ENCODE measurements at regions of chr11 and their contacts with region 1.

Region 1: DNA sequence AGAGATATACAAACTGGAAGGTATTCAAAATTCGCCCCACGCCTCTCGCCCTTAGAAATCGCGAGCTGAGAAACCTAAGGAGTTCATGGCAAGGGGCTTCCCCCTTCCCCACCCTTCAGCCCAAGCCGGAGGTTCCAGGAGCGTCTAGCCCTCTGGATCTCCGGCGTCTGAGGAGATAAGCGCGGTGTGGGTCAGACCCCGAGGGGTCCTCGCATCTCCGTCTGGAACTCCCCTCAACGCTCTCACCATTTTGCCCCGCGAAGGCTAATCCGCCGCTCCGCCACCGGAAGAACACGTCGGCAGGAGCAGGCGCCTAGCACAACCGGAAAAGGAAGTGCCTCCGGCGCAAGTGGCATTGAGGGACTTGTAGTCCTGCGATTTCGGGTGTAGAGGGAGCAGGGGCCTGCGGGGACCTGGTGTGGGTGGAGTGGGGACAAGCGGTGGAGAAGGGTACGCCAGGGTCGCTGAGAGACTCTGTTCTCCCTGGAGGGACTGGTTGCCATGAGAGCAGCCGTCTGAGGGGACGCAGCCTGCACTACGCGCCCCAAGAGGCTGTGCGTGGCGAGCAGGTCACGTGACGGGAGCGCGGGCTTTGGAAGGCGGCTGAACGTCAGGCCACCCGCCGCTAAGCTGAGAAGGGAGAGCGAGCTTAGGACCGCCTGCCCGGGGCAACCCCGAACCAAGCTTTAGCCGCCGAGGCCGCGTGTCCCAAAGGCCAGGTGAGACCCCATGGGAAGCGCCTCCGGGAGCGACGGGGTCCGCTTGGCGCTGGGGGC is at the starts of genes FEN1 and TMEM258:
- DNase-seq: peak; percentile 92 to 95
- ATAC-seq: peak; percentile 84 to 90
- H3K4me3 ChIP-seq: peak within 1 kb of the TSS; percentile 56
- H3K27ac ChIP-seq: peak within 1 kb of the TSS; percentile 92 to 100
- H3K4me1 ChIP-seq: peaks cover 24% of the 10 kb centered on the region; the same call in 1 of the 3 replicates
- CTCF ChIP-seq: no peak
- EP300 ChIP-seq: no peak
- POLR2A ChIP-seq: peak; percentile 79
- RAD21 ChIP-seq: no peak
- polyA plus RNA-seq, gene FEN1: 36.3 and 38.4 TPM in 2 replicates
- polyA plus RNA-seq, gene TMEM258: 280 and 375 TPM in 2 replicates

Region 2: DNA sequence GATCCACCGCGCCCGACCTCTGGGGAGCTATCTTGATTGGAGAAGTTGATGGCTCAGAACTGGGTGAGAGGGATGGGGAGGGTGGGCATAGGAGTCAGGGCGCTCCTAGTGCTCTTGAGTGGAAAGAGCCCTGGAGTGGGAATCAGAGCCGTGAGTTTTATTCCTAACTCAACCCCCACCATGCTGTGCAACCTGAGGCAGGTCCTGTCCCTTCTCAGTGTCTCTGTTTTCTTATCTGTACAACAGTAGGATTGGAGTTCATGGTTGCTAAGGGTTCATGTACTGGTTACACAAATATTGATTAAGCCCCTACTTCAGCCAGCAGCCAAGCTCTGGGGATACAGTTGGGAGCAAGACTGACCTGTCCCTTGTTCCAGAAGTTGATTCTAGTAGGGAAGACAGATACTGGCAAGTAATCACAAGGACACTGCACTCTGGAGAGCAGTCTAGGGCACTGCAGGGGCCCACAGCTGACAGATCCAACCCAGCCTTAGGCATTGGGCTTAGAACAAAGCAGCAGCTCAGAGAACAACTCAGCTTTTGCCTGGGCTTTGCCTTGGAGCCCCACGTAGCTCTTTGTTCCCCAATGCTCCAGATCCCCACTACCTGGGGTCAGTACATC is 124.7 kb before region 1 on chr11:
- CTCF ChIA-PET with region 1: no interaction called
- POLR2A ChIA-PET with region 1: no interaction called
- DNase-seq: no peak
- ATAC-seq: peak in 1 of 2 experiments; percentile 62; a peak in 3 of 6 replicates
- H3K4me3 ChIP-seq: no peak overlapping the region
- H3K27ac ChIP-seq: no peak overlapping the region
- H3K4me1 ChIP-seq: peaks cover 8% of the 10 kb centered on the region; the same call in 1 of the 3 replicates
- CTCF ChIP-seq: no peak
- EP300 ChIP-seq: no peak
- POLR2A ChIP-seq: no peak
- RAD21 ChIP-seq: no peak

Region 3: GRCh38 chr11:61747192-61747966 is 45.1 kb before region 1 on chr11:
- CTCF ChIA-PET with region 1: interaction called, 147 read pairs
- POLR2A ChIA-PET with region 1: no interaction called
- DNase-seq: peak; percentile 78 to 79
- ATAC-seq: peak; percentile 76 to 93
- H3K4me3 ChIP-seq: no peak overlapping the region
- H3K27ac ChIP-seq: peak overlapping the region; percentile 40 to 70; a peak in 5 of 6 replicates
- H3K4me1 ChIP-seq: peaks cover 14% of the 10 kb centered on the region
- CTCF ChIP-seq: peak; percentile 89
- EP300 ChIP-seq: no peak
- POLR2A ChIP-seq: no peak
- RAD21 ChIP-seq: peak; percentile 88 to 91

Region 4: GRCh38 chr11:61776551-61777075 is 15.9 kb before region 1 on chr11:
- CTCF ChIA-PET with region 1: interaction called, 18 read pairs
- POLR2A ChIA-PET with region 1: interaction called, 7 read pairs
- DNase-seq: peak; percentile 81 to 94
- ATAC-seq: peak; percentile 61 to 89
- H3K4me3 ChIP-seq: no peak overlapping the region
- H3K27ac ChIP-seq: 0 out of 6 replicates have a peak overlapping the region, but pooled peaks of 1 of the 2 experiments have one; percentile 42
- H3K4me1 ChIP-seq: peaks cover 18% of the 10 kb centered on the region
- CTCF ChIP-seq: peak; percentile 80
- EP300 ChIP-seq: no peak
- POLR2A ChIP-seq: no peak
- RAD21 ChIP-seq: peak; percentile 77 to 85

Region 5: DNA sequence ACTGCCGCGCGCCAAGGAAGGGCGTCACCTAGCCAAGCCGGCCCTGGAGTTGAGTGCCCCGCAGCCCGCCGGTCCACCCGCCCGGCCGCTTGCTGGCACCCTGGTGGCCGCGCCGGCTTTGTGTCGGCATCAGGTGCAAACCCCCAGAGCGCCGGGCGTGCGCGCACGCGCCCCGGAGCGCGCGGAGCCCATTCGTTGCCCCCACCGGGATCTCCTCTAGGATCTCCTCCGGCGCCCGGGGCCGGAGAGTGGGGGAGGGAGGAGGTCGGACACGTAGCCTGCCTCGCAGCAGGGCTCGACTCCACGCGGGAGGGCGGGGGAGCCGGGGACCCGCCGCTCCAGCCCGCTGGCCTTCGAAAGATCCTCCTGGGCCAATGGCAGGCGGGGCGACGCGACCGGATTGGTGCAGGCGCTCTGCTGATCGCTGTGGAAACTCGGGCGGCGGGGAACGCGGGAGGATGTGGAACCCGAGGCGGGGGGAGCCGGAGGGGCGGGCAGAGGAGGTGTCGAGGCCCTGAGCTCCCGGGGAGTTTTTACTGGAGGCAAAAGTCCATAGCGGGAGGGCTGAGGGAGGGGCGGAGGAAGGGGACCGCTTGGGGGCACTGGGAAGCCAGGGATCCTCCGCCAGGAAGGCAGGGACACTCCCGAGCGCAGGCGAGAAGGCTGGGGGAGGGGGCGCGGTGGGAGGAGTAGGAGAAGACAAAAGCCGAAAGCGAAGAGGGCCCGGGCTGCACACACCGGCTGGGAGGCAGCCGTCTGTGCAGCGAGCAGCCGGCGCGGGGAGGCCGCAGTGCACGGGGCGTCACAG is 35.3 kb after region 1 on chr11 and contains the start of gene FADS2:
- CTCF ChIA-PET with region 1: interaction called, 51 read pairs
- POLR2A ChIA-PET with region 1: interaction called, 4 read pairs
- DNase-seq: peak; percentile 87 to 93
- ATAC-seq: peak; percentile 81 to 90
- H3K4me3 ChIP-seq: peak within 1 kb of the TSS; percentile 100
- H3K27ac ChIP-seq: peak within 1 kb of the TSS; percentile 96 to 100
- H3K4me1 ChIP-seq: peaks cover 43% of the 10 kb centered on the region
- CTCF ChIP-seq: peak; percentile 8; the same call in 1 of the 3 replicates
- EP300 ChIP-seq: peak in 1 of 2 experiments; percentile 46; a peak in 1 of 5 replicates
- POLR2A ChIP-seq: peak; percentile 98
- RAD21 ChIP-seq: peak; percentile 26 to 29; a peak in 2 of 5 replicates
- polyA plus RNA-seq, gene FADS2: 215 and 278 TPM in 2 replicates

Region 6: DNA sequence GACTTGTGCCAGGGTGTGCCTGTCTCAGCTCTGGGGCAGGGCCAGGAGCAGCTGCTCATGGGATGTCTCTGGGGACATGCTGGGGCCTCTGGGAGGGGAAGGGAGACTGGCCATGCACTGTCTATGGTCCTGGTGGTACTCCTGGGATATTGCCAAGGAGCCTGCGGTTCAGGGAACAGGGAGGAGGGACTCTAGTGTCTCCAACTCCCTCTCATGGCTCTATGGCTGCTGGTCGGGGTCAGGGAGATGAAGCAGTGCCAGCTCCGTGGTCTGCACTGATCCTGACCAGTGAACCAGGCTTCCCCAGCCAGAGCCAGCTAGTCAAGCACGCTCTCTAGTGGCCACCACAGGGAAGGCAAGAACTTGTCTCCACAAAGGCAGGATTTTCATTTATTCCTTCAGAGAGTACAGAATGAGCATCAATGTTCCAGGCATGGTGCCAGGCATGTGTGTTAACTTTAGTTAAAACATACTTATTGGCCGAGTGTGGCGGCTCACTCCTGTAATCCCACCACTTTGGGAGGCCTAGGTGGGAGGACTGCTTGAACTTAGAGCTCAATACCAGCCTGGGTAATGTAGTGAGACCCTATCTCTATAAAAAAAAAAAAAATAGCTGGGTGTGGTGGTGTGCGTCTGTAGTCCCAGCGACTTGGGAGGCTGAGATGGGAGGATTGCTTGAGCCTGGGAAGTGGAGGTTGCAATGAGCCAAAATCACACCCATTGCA is 155.2 kb after region 1 on chr11:
- CTCF ChIA-PET with region 1: interaction called, 95 read pairs
- POLR2A ChIA-PET with region 1: interaction called, 3 read pairs
- DNase-seq: peak; percentile 82 to 89
- ATAC-seq: peak; percentile 83 to 91
- H3K4me3 ChIP-seq: no peak overlapping the region
- H3K27ac ChIP-seq: peak overlapping the region; percentile 71 to 72
- H3K4me1 ChIP-seq: peaks cover 35% of the 10 kb centered on the region
- CTCF ChIP-seq: peak; percentile 97
- EP300 ChIP-seq: no peak
- POLR2A ChIP-seq: no peak
- RAD21 ChIP-seq: peak; percentile 98 to 99